Sigmoid colon (tissue), 7 donors: ENCODE measurements at regions of chr22 and their contacts with region 1.

Region 1: GRCh38 chr22:36194971-36195370 is 6.6 kb downstream of the APOL4 start:
- DNase-seq: peak; percentile 88
- H3K4me3 ChIP-seq: no peak overlapping the region
- H3K27ac ChIP-seq: peak overlapping the region in 1 of 4 donors; percentile 18
- H3K4me1 ChIP-seq: peaks cover 0 to 28% (median 3%) of the 10 kb centered on the region in 4 donors
- H3K27me3 ChIP-seq: no peaks in the 10 kb centered on the region
- CTCF ChIP-seq: peak; percentile 68 to 80 (median 75)
- EP300 ChIP-seq: no peak
- POLR2A ChIP-seq: no peak

Region 2: DNA sequence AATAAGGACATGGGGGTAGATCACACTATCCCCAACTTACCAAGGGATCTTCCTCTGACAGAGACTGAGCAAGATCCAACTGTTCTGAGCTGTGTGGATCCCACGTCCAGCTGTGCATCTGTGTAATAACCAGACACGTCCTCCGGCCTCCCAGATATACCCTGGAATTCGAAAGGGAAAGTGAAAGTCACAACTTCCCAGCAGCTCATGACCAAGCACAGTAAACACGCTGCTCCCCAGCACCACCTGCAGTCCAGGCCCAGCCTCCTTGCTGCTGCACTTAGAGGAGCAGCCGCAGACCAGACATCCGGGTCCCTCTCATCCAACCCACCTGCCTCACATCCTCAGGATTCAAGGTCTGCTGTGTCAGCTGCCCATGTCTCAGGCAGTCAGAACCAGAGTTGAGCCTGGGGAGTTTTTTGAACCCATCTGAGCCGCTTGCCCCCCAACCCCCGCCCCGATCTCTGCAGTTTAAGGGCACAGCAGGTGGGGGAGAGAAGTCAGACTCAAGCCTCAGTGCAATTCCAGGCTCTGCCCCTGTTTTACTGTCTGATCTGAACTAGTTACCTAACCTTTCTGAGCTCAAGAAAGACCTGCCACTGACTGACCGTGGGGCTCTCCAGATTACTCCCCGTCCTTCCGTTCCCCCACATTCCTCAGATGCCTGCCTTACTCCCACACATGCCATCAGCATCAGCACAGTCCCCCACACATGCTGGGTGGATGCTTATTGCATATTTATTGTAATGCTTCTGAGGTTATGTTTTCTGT is 44.6 kb after region 1 on chr22 and contains the start of gene APOL2:
- intact Hi-C with region 1: loop called (anchors 5 kb)
- DNase-seq: peak; percentile 97
- H3K4me3 ChIP-seq: peak within 1 kb of the TSS; percentile 36 to 60 (median 55)
- H3K27ac ChIP-seq: peak within 1 kb of the TSS; percentile 90 to 93 (median 90)
- H3K4me1 ChIP-seq: peaks cover 0 to 61% (median 49%) of the 10 kb centered on the region in 4 donors
- H3K27me3 ChIP-seq: no peaks in the 10 kb centered on the region
- CTCF ChIP-seq: peak; percentile 47 to 69 (median 56)
- EP300 ChIP-seq: peak in 1 of 4 donors; percentile 18
- POLR2A ChIP-seq: peak; percentile 59 to 82
- total RNA-seq, gene APOL2: 26.8 to 59.5 (median 29.4) TPM

Region 3: DNA sequence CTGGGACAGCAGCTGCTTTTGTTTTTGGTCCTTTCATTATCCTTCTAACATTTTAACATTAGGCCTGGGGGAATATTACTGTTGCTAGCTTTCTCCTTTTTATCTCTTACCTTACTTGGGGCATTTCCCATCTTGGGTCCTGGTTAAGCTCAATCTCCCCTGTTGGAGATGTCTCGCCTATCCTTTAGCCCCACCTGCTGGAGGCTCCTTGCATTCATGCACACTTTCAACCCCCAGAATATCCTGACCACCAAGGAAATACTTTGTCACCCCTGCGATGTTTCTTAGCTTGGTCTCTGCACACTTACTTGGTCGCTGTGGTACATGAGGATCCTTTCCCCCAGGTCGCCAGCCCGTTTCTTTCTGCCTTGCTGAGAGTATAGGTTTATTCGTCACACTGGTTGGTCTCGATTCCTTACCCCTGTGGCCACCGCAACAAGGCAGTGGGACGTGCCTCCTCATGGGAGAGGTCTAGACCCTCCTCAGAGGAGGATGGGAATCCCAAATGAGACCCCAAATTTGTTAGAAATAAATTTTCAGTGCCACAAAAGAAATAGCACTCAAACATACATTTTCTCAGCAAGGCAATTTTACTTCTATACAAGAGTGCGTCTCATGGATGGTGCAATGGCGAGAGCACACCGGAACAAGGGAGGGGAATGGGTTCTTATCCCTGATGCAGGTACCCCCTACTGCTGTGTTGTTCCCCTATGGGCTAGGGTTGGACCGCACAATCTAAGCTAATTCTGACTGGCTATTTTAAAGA is 291.8 kb after region 1 on chr22:
- intact Hi-C with region 1: loop called (anchors 1 kb)
- DNase-seq: no peak
- H3K4me3 ChIP-seq: no peak overlapping the region
- H3K27ac ChIP-seq: peak overlapping the region in 2 of 4 donors; percentile 6 to 30
- H3K4me1 ChIP-seq: peaks cover 0 to 9% (median 7%) of the 10 kb centered on the region in 4 donors
- H3K27me3 ChIP-seq: no peaks in the 10 kb centered on the region
- CTCF ChIP-seq: peak; percentile 76 to 84 (median 77)
- EP300 ChIP-seq: no peak
- POLR2A ChIP-seq: no peak